Activated CD4-positive, alpha-beta T cell treated with anti-CD3 and anti-CD28 coated beads, Interleukin-2, amount 10 ng/mL, durations not matched to agents 24 days and 14 days (primary cell): ENCODE measurements at regions of chr6 and their contacts with region 1.

Region 1: GRCh38 chr6:2940010-2940850 is 31.1 kb downstream of the SERPINB6 start:
- DNase-seq: peak; percentile 92
- H3K4me3 Mint-ChIP-seq: peak overlapping the region; percentile 67
- H3K27ac Mint-ChIP-seq: peak overlapping the region; percentile 97
- H3K4me1 Mint-ChIP-seq: peaks cover 51% of the 10 kb centered on the region
- H3K27me3 Mint-ChIP-seq: peaks cover 9% of the 10 kb centered on the region

Region 2: DNA sequence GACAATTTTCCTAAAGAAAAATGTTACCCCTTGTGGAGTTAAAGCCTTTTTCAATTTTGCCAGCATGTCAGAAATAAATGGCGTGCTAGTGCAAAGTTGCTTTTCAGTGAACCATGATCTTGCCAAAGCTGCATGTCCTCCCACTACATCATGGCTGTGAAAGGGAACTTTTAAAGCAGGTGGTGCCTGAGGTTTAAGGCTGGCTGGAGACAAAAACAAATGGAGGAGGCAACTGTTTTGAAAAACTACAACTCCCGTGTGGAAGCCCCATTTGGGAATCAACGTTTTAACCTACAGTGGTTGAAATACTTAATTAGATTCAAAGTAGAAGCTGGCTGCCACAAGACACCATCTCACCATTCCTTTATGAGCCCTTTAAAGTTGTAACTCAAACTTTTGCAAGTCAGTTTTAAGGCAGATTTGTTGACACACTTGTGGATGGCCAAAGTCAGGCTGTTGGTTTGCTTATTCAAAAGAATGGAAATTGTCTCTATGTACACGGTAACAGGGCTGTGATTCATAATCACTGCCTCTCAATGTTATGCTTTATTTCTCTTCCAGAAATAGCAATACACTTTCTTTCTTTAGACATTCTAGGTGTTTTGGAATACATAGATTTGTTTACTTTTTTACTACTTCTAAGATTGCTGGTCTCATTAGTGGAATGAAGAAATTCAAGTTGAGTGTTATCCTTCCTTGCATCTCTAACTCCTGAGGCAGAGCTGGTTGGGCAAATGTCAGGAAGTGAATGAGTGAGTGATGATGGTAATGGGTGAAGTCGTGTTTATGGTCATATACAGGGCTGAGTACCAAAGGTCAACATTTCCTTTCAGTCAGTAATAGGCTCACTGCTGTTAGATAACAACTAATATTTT is 498.4 kb before region 1 on chr6:
- intact Hi-C with region 1: no loop called
- DNase-seq: no peak
- H3K4me3 Mint-ChIP-seq: no peak overlapping the region
- H3K27ac Mint-ChIP-seq: no peak overlapping the region
- H3K4me1 Mint-ChIP-seq: no peaks in the 10 kb centered on the region
- H3K27me3 Mint-ChIP-seq: peaks cover 15% of the 10 kb centered on the region

Region 3: DNA sequence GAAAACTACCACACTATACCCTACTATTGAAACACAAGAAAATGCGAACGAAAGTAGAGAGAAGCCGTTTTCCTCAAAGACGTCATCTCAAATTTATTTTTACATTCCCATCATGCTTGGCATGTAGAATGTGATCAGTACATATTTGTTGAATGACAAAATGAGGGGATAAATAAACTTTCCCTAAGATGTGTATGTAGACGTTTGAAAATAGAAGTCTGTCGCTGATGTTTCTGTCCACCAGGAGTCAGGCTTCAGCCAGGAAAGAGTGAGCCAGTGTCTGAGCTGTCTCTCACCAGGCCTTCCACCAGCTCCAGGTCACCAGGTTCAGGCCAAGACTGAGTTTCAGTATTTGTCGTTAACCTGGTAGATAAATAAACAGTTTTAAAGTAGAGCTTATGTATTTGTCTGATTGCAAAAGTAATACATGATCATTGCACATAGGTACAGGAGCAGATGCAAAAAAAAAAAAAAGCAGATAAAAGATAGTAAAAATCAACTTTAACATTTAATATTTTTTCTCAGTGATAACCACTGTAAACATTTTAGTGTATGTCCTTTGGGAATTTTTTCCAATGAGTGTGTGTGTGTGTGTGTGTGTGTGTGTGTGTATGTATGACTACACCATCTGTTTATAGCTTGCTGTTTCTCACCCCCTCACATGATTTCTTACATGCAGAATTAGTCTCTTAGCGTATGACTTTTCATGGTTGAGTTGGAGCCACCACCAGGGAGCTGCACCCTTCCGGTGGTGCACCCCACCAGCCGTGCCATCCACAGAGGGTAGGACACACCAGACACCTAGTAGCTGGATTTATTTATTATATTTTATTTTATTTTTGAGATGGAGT is 148.9 kb before region 1 on chr6:
- intact Hi-C with region 1: loop called (anchors 1 kb)
- DNase-seq: peak; percentile 89
- H3K4me3 Mint-ChIP-seq: peak overlapping the region; percentile 69
- H3K27ac Mint-ChIP-seq: peak overlapping the region; percentile 86
- H3K4me1 Mint-ChIP-seq: peaks cover 35% of the 10 kb centered on the region
- H3K27me3 Mint-ChIP-seq: no peaks in the 10 kb centered on the region

Region 4: GRCh38 chr6:2853761-2854395 is 86.4 kb before region 1 on chr6:
- intact Hi-C with region 1: loop called (anchors 1 kb)
- DNase-seq: peak; percentile 87
- H3K4me3 Mint-ChIP-seq: peak overlapping the region; percentile 80
- H3K27ac Mint-ChIP-seq: peak overlapping the region; percentile 98
- H3K4me1 Mint-ChIP-seq: peaks cover 65% of the 10 kb centered on the region
- H3K27me3 Mint-ChIP-seq: no peaks in the 10 kb centered on the region

Region 5: DNA sequence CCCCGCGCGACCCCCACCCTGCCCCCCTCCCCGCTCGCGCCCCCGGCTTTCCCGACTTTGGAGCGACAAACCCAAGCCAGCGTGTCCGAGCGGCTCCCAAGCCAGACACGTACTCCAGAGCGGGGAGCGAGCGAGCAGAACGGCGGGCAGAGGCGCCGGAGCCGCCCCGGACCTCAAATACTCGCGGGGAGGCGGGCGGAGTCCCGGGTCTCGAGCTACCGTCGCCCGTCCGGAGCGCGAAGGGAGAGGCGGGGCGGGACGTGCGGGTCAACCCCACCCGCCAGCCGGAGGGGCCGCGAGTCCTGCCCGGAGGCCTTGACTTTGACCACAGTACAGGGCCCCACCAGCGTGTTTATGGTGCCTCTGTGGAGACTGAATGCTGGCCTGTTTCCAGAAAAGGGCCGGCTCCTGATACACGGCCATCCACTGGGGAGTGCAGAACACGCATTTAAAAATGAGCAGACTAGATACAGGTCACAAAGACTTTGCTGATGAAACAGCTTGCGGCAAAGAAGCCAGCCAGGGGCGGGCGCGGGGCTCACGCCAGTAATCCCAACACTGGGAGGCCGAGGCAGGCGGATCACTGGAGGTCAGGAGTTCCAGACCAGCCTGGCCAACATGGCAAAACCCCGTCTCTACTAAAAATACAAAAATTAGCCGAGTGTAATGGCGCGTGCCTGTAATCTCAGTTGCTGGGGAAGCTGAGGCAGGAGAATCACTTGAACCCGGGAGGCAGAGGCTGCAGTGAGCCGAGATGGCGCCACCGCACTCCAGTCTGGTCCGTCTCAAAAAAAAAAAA is 31.4 kb after region 1 on chr6 and contains the start of gene SERPINB6:
- intact Hi-C with region 1: loop called (anchors 1 kb)
- DNase-seq: peak; percentile 82
- H3K4me3 Mint-ChIP-seq: peak within 1 kb of the TSS; percentile 87
- H3K27ac Mint-ChIP-seq: peak within 1 kb of the TSS; percentile 85
- H3K4me1 Mint-ChIP-seq: peaks cover 11% of the 10 kb centered on the region
- H3K27me3 Mint-ChIP-seq: peaks cover 51% of the 10 kb centered on the region
- total RNA-seq, gene SERPINB6: 33.1 and 36.2 TPM in 2 replicates

Region 6: GRCh38 chr6:2999618-3000557 is 59.7 kb after region 1 on chr6 and contains the start of gene NQO2:
- intact Hi-C with region 1: loop called (anchors 1 kb)
- DNase-seq: peak; percentile 97
- H3K4me3 Mint-ChIP-seq: peak within 1 kb of the TSS; percentile 92
- H3K27ac Mint-ChIP-seq: peak within 1 kb of the TSS; percentile 88
- H3K4me1 Mint-ChIP-seq: peaks cover 30% of the 10 kb centered on the region
- H3K27me3 Mint-ChIP-seq: peaks cover 3% of the 10 kb centered on the region
- total RNA-seq, gene NQO2: 29.1 and 34.0 TPM in 2 replicates

Region 7: DNA sequence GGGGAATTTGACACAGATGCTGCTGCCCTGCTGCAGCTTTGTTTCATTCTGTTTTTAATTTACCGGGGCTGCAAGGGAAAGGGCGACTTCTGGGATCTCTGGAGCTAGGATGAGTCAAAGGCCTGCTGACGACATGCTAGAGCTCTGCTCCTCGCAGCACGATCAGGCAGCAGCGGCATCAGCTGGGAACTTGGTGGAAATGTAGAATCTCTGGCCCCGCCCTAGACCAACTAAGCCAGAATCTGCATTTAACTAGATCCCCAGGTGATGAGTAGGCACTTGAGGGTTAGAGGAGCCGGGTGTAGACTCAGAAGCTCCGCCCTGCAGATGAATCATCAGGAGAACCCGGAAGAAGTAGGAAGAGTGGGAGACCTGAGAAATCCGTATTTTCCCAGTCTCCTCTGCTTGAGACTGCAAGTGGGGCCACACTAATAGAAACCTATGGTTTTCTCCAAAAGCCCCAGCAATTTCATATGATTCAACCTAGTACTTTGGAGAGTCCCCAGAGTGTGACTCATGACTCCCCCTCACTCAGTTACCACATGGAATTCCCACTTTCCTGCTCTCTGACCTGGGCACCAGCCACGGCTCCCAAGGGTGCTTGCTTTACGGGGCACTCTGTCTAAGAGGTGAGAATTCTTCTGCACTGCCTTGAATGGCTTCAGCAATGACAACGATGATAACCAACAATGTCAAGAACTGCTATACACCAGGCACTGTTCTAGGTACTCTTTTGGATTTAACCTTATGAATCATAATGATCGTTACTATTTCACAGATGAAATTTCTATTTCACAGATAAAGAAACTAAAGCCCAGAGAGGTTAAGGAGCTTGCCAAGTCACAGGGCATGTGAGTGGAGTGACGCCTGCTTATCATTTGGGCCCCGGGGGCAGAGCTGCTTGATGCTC is 269.1 kb after region 1 on chr6:
- intact Hi-C with region 1: loop called (anchors 1 kb)
- DNase-seq: peak; percentile 70
- H3K4me3 Mint-ChIP-seq: peak overlapping the region; percentile 46
- H3K27ac Mint-ChIP-seq: peak overlapping the region; percentile 94
- H3K4me1 Mint-ChIP-seq: peaks cover 25% of the 10 kb centered on the region
- H3K27me3 Mint-ChIP-seq: peaks cover 26% of the 10 kb centered on the region